Dendritic cell treated with granulocyte-macrophage colony-stimulating factor and Interleukin-4, amounts not matched to agents 40 ng/mL and 50 ng/mL, for 4 days (primary cell): ENCODE measurements at regions of chr15 and their contacts with region 1.

Region 1: GRCh38 chr15:50886140-50886467 is 22.4 kb upstream of the AP4E1 start:
- H3K4me3 Mint-ChIP-seq: no peak overlapping the region
- H3K27ac Mint-ChIP-seq: peak overlapping the region; percentile 95
- H3K4me1 Mint-ChIP-seq: peaks cover 42% of the 10 kb centered on the region
- H3K27me3 Mint-ChIP-seq: no peaks in the 10 kb centered on the region

Region 2: DNA sequence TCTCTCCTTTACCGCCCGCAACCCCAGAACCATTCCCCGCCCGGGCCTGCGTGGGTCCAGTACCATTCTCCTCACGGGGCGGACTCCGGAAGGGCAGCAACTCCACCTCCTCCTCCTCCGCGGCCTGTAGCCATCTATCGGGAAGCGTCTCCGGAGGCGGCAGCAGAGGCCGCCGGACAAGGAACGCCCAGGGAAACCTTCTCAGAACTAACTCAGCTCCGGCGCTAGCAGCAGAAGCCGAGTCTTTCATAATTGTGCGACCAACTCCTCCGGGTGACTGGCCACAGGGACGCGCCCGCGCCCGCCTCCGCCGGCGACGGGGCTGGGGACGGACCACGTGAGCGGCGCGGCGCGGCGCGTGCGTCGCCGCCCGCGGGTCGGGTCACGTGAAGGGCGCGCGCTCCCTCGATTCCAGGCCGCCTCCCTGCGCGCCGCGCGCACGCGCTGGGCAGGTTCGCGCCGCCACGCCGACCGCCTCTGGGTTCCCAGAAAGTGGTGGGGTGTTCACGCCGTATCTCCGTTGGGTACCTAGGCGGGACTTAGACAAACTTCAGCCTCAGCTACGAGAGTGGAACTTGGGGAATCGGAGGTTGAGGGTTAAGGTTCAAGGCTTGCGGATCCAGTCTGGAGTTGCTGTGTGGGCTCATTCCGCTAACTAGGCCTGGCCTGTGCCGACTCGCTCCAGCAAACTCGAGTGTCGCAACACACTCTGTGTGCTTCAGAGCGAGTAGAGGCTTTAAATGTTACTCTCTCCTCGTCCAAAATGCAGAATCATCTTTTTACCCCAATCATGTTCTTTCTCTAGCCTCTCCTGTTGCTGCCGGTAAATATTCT is 199.4 kb before region 1 on chr15 and contains the start of gene TRPM7:
- intact Hi-C with region 1: loop called (anchors 5 kb)
- H3K4me3 Mint-ChIP-seq: peak within 1 kb of the TSS; percentile 95
- H3K27ac Mint-ChIP-seq: peak within 1 kb of the TSS; percentile 95
- H3K4me1 Mint-ChIP-seq: peaks cover 56% of the 10 kb centered on the region
- H3K27me3 Mint-ChIP-seq: no peaks in the 10 kb centered on the region

Region 3: GRCh38 chr15:50855092-50855396 is 31.1 kb before region 1 on chr15:
- intact Hi-C with region 1: no loop called
- H3K4me3 Mint-ChIP-seq: no peak overlapping the region
- H3K27ac Mint-ChIP-seq: no peak overlapping the region
- H3K4me1 Mint-ChIP-seq: peaks cover 5% of the 10 kb centered on the region
- H3K27me3 Mint-ChIP-seq: no peaks in the 10 kb centered on the region

Region 4: GRCh38 chr15:50925281-50925680 is 39.2 kb after region 1 on chr15:
- intact Hi-C with region 1: no loop called
- H3K4me3 Mint-ChIP-seq: no peak overlapping the region
- H3K27ac Mint-ChIP-seq: no peak overlapping the region
- H3K4me1 Mint-ChIP-seq: no peaks in the 10 kb centered on the region
- H3K27me3 Mint-ChIP-seq: no peaks in the 10 kb centered on the region

Region 5: GRCh38 chr15:51414257-51415044 is 528.3 kb after region 1 on chr15:
- intact Hi-C with region 1: no loop called
- H3K4me3 Mint-ChIP-seq: no peak overlapping the region
- H3K27ac Mint-ChIP-seq: no peak overlapping the region
- H3K4me1 Mint-ChIP-seq: no peaks in the 10 kb centered on the region
- H3K27me3 Mint-ChIP-seq: peaks cover 1% of the 10 kb centered on the region